Activated CD4-positive, alpha-beta memory T cell treated with anti-CD3 and anti-CD28 coated beads for 36 hours (primary cell): ENCODE measurements at regions of chr17 and their contacts with region 1.

Region 1: DNA sequence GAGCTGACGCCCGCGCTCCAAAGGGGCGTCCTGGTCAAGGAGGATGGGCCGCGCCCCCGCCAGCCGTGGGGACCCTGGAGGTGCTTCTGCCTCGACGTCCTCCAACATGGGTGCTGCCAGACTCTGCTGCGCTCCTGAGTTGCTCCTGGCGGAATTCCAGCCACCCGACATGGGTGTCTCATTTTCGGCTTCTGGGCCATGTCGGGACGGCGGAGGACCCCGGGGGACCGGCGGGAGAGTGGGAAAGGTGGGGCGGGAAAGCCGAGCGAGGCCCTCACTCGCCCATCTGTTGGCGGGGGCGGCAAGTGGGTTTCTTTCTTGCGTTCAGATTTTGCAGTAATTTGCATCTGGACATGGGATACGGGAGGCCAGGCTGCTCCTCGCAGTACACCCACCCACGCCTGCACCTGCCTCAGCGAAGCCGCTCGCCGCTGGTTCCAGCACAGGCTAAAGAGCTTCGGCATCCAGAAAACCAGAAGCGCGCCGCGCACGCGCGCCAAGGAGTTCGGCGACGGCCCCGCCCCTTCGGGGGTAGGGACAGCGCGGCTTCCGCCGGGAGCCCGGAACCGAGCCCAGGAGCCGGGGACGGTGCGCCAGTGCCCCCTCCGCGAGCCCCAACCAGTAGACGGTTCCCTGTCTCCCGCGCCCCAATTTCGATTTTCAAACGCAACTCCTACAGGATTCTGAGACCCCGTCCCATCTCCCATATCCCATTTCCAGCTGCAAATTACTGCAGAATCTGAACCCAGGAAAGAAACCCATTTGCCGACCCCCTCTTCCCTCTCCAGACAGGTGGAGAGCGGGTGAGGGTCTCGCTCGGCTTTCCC is at the start of gene ARMC7:
- DNase-seq: peak; percentile 96
- H3K4me3 Mint-ChIP-seq: peak within 1 kb of the TSS; percentile 90
- H3K27ac Mint-ChIP-seq: peak within 1 kb of the TSS; percentile 85
- H3K4me1 Mint-ChIP-seq: peaks cover 29% of the 10 kb centered on the region
- H3K27me3 Mint-ChIP-seq: no peaks in the 10 kb centered on the region
- total RNA-seq, gene ARMC7: 6.5 to 8.2 TPM

Region 2: DNA sequence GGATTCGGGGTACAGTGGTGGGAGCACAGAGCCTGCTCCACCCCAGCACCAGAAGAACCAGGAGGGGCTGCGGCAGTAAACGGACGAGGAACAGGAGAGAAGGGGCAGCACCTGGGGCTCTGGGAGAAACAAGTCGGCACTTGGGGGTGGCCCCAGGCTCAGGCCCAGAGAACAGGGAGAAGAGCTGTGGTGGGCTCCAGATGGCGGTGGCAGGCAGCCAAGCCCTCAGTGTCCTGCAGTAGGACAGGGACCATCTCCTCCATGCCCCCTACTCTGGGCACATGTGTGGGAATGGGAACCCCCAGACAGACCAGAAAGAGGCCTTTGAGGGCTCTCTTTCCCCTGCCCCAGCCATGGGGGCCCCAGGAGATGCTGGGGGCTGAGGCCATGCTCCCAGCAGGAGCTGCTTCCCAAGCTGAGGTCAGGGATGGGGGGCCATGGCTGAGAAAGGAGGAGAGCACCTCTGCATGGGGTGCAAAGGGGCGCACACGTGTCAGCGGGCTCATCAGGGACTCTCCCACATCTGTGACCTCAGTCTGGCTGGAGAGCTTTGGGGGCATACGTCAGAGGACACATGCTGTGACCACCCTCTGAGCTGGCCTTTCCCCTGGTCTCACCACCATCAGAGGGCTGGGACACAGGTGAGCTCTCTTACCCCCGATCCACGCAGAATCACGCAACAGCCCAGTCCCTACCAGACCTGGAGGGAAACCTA is 193.3 kb before region 1 on chr17:
- CTCF ChIA-PET with region 1: no interaction called
- POLR2A ChIA-PET with region 1: no interaction called
- intact Hi-C with region 1: no loop called
- DNase-seq: no peak
- H3K4me3 Mint-ChIP-seq: no peak overlapping the region
- H3K27ac Mint-ChIP-seq: no peak overlapping the region
- H3K4me1 Mint-ChIP-seq: no peaks in the 10 kb centered on the region
- H3K27me3 Mint-ChIP-seq: peaks cover 17% of the 10 kb centered on the region

Region 3: GRCh38 chr17:75046582-75047289 is 62.9 kb before region 1 on chr17 and contains the starts of genes ATP5PD and KCTD2:
- CTCF ChIA-PET with region 1: interaction called, 9 read pairs
- POLR2A ChIA-PET with region 1: no interaction called
- intact Hi-C with region 1: loop called (anchors 5 kb)
- DNase-seq: peak; percentile 98
- H3K4me3 Mint-ChIP-seq: peak within 1 kb of the TSS; percentile 97
- H3K27ac Mint-ChIP-seq: peak within 1 kb of the TSS; percentile 91
- H3K4me1 Mint-ChIP-seq: peaks cover 42% of the 10 kb centered on the region
- H3K27me3 Mint-ChIP-seq: no peaks in the 10 kb centered on the region
- total RNA-seq, gene ATP5PD: 249 to 261 TPM
- total RNA-seq, gene KCTD2: 20.6 to 23.3 TPM

Region 4: GRCh38 chr17:75089707-75090252 is 19.8 kb before region 1 on chr17:
- CTCF ChIA-PET with region 1: interaction called, 5 read pairs
- POLR2A ChIA-PET with region 1: interaction called, 4 read pairs
- intact Hi-C with region 1: loop called (anchors 1 kb)
- DNase-seq: no peak
- H3K4me3 Mint-ChIP-seq: no peak overlapping the region
- H3K27ac Mint-ChIP-seq: no peak overlapping the region
- H3K4me1 Mint-ChIP-seq: peaks cover 33% of the 10 kb centered on the region
- H3K27me3 Mint-ChIP-seq: no peaks in the 10 kb centered on the region

Region 5: DNA sequence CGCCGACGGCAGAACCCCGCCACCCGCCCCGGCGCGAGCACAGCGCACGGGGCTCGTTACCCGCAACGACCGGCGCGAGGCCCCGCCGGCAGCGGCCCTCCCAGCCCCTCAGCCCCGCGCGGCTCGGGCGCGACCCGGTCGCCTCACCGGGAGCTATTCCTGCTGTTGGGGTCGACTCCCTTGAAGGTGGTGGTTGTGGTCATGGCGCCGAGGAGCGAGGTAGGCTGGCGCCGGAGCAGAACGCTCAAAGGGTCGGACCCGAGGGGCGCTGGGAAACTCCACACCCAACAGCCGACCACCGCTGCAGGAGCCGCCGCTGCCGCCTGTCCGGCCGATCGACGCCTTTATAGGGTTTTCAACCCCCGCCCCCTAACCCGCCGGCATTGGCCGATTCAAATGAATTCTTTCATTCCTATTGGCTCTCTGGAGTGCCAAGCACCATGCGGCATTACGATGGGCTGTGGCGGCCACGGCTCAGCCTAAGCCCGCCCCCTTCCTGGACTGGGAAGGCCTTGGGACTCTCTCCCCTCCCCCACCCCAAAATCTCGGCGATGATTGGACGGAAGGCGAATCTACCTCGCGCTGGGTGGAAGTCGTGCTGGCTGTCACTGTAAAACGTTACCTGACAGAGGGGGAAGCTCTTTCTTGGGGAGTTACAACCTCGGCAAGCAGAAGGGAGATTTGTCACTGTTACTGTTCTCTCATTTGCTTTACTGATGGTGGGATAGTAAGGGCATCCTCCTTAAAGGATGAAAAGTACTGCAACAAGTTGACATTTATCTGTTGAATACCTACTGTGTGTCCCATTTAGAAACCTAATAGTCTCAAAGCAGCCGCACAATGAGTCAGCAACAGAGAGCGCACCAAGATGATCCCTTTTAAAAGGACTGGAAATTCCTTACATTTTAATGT is 44.8 kb after region 1 on chr17 and contains the start of gene JPT1:
- CTCF ChIA-PET with region 1: interaction called, 13 read pairs
- POLR2A ChIA-PET with region 1: interaction called, 3 read pairs
- intact Hi-C with region 1: loop called (anchors 2 kb)
- DNase-seq: peak; percentile 99
- H3K4me3 Mint-ChIP-seq: peak within 1 kb of the TSS; percentile 95
- H3K27ac Mint-ChIP-seq: peak within 1 kb of the TSS; percentile 86
- H3K4me1 Mint-ChIP-seq: peaks cover 34% of the 10 kb centered on the region
- H3K27me3 Mint-ChIP-seq: no peaks in the 10 kb centered on the region
- total RNA-seq, gene JPT1: 263 to 267 TPM

Region 6: GRCh38 chr17:75205037-75205792 is 95.6 kb after region 1 on chr17 and contains the start of gene NUP85:
- CTCF ChIA-PET with region 1: interaction called, 247 read pairs
- POLR2A ChIA-PET with region 1: interaction called, 4 read pairs
- intact Hi-C with region 1: loop called (anchors 1 kb)
- DNase-seq: peak; percentile 95
- H3K4me3 Mint-ChIP-seq: peak within 1 kb of the TSS; percentile 81
- H3K27ac Mint-ChIP-seq: peak within 1 kb of the TSS; percentile 89
- H3K4me1 Mint-ChIP-seq: peaks cover 18% of the 10 kb centered on the region
- H3K27me3 Mint-ChIP-seq: no peaks in the 10 kb centered on the region
- total RNA-seq, gene NUP85: 125 to 132 TPM

Region 7: DNA sequence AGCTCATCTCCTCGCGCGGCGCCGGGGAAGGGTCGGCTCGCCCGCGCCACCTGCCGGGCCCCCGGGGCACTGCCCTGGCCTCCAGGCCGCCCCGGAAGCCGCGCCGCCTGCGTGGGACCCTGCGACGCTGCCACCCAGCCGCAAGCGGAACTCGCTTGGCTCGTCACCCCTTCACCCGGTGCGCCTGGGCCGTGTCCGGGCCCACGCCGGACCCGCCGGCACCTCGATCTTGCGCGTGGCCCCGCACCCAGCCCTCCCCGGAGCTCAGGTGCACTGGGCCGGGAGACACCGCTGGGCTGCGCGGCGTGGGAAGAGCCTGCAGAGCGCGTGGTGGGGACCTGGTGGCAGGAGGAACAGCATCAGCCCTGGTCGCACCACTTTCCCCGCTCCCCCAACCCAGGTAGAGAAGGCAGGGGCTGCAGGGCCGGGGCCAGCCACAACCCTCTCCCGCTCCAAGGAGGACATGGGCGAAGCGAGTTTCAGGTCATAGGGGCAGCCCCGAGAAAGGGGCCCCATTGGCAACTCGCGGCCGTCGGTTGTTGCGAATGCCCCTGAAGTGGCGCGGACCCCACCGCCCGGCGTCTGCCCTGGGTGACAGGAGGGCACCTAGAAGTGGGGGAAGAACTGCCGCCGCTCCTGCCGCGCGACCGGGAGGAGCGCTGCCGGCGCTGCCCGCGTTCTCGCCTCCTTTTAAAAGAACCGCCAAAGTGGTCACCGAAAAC is 161.8 kb after region 1 on chr17:
- CTCF ChIA-PET with region 1: interaction called, 36 read pairs
- POLR2A ChIA-PET with region 1: interaction called, 5 read pairs
- intact Hi-C with region 1: no loop called
- DNase-seq: peak; percentile 91
- H3K4me3 Mint-ChIP-seq: peak overlapping the region; percentile 75
- H3K27ac Mint-ChIP-seq: peak overlapping the region; percentile 63
- H3K4me1 Mint-ChIP-seq: peaks cover 31% of the 10 kb centered on the region
- H3K27me3 Mint-ChIP-seq: no peaks in the 10 kb centered on the region

Region 8: GRCh38 chr17:75309025-75309772 is 199.6 kb after region 1 on chr17:
- CTCF ChIA-PET with region 1: no interaction called
- POLR2A ChIA-PET with region 1: no interaction called
- intact Hi-C with region 1: no loop called
- DNase-seq: no peak
- H3K4me3 Mint-ChIP-seq: no peak overlapping the region
- H3K27ac Mint-ChIP-seq: no peak overlapping the region
- H3K4me1 Mint-ChIP-seq: peaks cover 13% of the 10 kb centered on the region
- H3K27me3 Mint-ChIP-seq: no peaks in the 10 kb centered on the region